HCT116 (cell line): ENCODE measurements at regions of chr12 and their contacts with region 1.

Region 1: GRCh38 chr12:113980537-113981337 is 14.6 kb upstream of the RBM19 start:
- DNase-seq: peak; percentile 61
- ATAC-seq: peak; percentile 89
- H3K4me3 ChIP-seq: no peak overlapping the region
- H3K27ac ChIP-seq: no peak overlapping the region
- H3K4me1 ChIP-seq: no peaks in the 10 kb centered on the region
- H3K27me3 ChIP-seq: peaks cover 45% of the 10 kb centered on the region
- CTCF ChIP-seq: peak; percentile 87 to 99 (median 89)
- POLR2A ChIP-seq: no peak
- RAD21 ChIP-seq: peak; percentile 97

Region 2: GRCh38 chr12:113996026-113996425 is 15.3 kb after region 1 on chr12:
- CTCF ChIA-PET with region 1: interaction called, 13 read pairs
- POLR2A ChIA-PET with region 1: no interaction called
- RAD21 ChIA-PET with region 1: no interaction called
- intact Hi-C with region 1: no loop called
- DNase-seq: no peak
- ATAC-seq: peak; percentile 74
- H3K4me3 ChIP-seq: no peak overlapping the region
- H3K27ac ChIP-seq: no peak overlapping the region
- H3K4me1 ChIP-seq: no peaks in the 10 kb centered on the region
- H3K27me3 ChIP-seq: peaks cover 73% of the 10 kb centered on the region
- CTCF ChIP-seq: peak in 1 of 3 experiments; percentile 23; a peak in 2 of 6 replicates
- POLR2A ChIP-seq: no peak
- RAD21 ChIP-seq: no peak

Region 3: GRCh38 chr12:114476159-114476558 is 495.4 kb after region 1 on chr12:
- CTCF ChIA-PET with region 1: interaction called, 7 read pairs
- POLR2A ChIA-PET with region 1: no interaction called
- RAD21 ChIA-PET with region 1: interaction called in 1 of 2 experiments, 4 read pairs
- intact Hi-C with region 1: loop called (anchors 1 kb)
- DNase-seq: peak; percentile 13
- ATAC-seq: peak; percentile 74
- H3K4me3 ChIP-seq: no peak overlapping the region
- H3K27ac ChIP-seq: no peak overlapping the region
- H3K4me1 ChIP-seq: no peaks in the 10 kb centered on the region
- H3K27me3 ChIP-seq: peaks cover 84% of the 10 kb centered on the region
- CTCF ChIP-seq: peak; percentile 47 to 72 (median 58)
- POLR2A ChIP-seq: no peak
- RAD21 ChIP-seq: peak; percentile 63

Region 4: GRCh38 chr12:114625294-114625851 is 644.6 kb after region 1 on chr12:
- CTCF ChIA-PET with region 1: interaction called, 12 read pairs
- POLR2A ChIA-PET with region 1: no interaction called
- RAD21 ChIA-PET with region 1: no interaction called
- intact Hi-C with region 1: no loop called
- DNase-seq: peak; percentile 52
- ATAC-seq: peak; percentile 89
- H3K4me3 ChIP-seq: no peak overlapping the region
- H3K27ac ChIP-seq: no peak overlapping the region
- H3K4me1 ChIP-seq: peaks cover 12 to 18% of the 10 kb centered on the region in 2 experiments; a peak in 3 of 4 replicates
- H3K27me3 ChIP-seq: no peaks in the 10 kb centered on the region
- CTCF ChIP-seq: peak; percentile 73 to 89 (median 87)
- POLR2A ChIP-seq: no peak
- RAD21 ChIP-seq: peak; percentile 85

Region 5: GRCh38 chr12:114655934-114656749 is 675.4 kb after region 1 on chr12:
- CTCF ChIA-PET with region 1: interaction called, 11 read pairs
- POLR2A ChIA-PET with region 1: no interaction called
- RAD21 ChIA-PET with region 1: no interaction called
- intact Hi-C with region 1: no loop called
- DNase-seq: peak; percentile 35
- ATAC-seq: peak; percentile 87
- H3K4me3 ChIP-seq: 0 out of 4 replicates have a peak overlapping the region, but pooled peaks of 1 of the 2 experiments have one; percentile 6
- H3K27ac ChIP-seq: no peak overlapping the region
- H3K4me1 ChIP-seq: peaks cover 6 to 22% of the 10 kb centered on the region in 2 experiments; a peak in 3 of 4 replicates
- H3K27me3 ChIP-seq: no peaks in the 10 kb centered on the region
- CTCF ChIP-seq: no peak
- POLR2A ChIP-seq: no peak
- RAD21 ChIP-seq: no peak

Region 6: GRCh38 chr12:115752913-115753726 is 1772.4 kb after region 1 on chr12:
- CTCF ChIA-PET with region 1: interaction called, 4 read pairs
- POLR2A ChIA-PET with region 1: no interaction called
- RAD21 ChIA-PET with region 1: no interaction called
- intact Hi-C with region 1: loop called (anchors 1 kb)
- DNase-seq: peak; percentile 42
- ATAC-seq: peak; percentile 98
- H3K4me3 ChIP-seq: no peak overlapping the region
- H3K27ac ChIP-seq: no peak overlapping the region
- H3K4me1 ChIP-seq: no peaks in the 10 kb centered on the region
- H3K27me3 ChIP-seq: peaks cover 51% of the 10 kb centered on the region
- CTCF ChIP-seq: peak; percentile 44 to 66 (median 65); a peak in 4 of 6 replicates
- POLR2A ChIP-seq: no peak
- RAD21 ChIP-seq: peak; percentile 90